GM12878 (cell line): ENCODE measurements at regions of chr12 and their contacts with region 1.

Region 1: GRCh38 chr12:50187084-50187900 is 20.1 kb upstream of the CERS5 start:
- DNase-seq: peak; percentile 47
- ATAC-seq: peak; percentile 91
- H3K4me3 ChIP-seq: no peak overlapping the region
- H3K27ac ChIP-seq: peak overlapping the region; percentile 64
- H3K4me1 ChIP-seq: peaks cover 28% of the 10 kb centered on the region
- H3K27me3 ChIP-seq: no peaks in the 10 kb centered on the region
- CTCF ChIP-seq: no peak
- EP300 ChIP-seq: peak; percentile 94 to 96; a peak in 3 of 4 replicates
- POLR2A ChIP-seq: no peak
- RAD21 ChIP-seq: 0 out of 2 replicates have a peak, but pooled peaks have one; percentile 6

Region 2: GRCh38 chr12:50167041-50167828 is 20.1 kb before region 1 on chr12 and contains the start of gene CERS5:
- CTCF ChIA-PET with region 1: interaction called, 10 read pairs
- POLR2A ChIA-PET with region 1: interaction called, 10 read pairs
- RAD21 ChIA-PET with region 1: interaction called, 3 read pairs
- SMC1A ChIA-PET with region 1: interaction called, 9 read pairs
- in situ Hi-C with region 1: no loop called
- intact Hi-C with region 1: no loop called
- DNase-seq: peak; percentile 85
- ATAC-seq: peak; percentile 99
- H3K4me3 ChIP-seq: peak within 1 kb of the TSS; percentile 80
- H3K27ac ChIP-seq: peak within 1 kb of the TSS; percentile 71
- H3K4me1 ChIP-seq: no peaks in the 10 kb centered on the region
- H3K27me3 ChIP-seq: no peaks in the 10 kb centered on the region
- CTCF ChIP-seq: no peak
- EP300 ChIP-seq: peak in 1 of 2 experiments; percentile 22; a peak in 1 of 4 replicates
- POLR2A ChIP-seq: peak; percentile 87
- RAD21 ChIP-seq: no peak
- polyA plus RNA-seq, gene CERS5: 6.8 to 12.2 TPM

Region 3: DNA sequence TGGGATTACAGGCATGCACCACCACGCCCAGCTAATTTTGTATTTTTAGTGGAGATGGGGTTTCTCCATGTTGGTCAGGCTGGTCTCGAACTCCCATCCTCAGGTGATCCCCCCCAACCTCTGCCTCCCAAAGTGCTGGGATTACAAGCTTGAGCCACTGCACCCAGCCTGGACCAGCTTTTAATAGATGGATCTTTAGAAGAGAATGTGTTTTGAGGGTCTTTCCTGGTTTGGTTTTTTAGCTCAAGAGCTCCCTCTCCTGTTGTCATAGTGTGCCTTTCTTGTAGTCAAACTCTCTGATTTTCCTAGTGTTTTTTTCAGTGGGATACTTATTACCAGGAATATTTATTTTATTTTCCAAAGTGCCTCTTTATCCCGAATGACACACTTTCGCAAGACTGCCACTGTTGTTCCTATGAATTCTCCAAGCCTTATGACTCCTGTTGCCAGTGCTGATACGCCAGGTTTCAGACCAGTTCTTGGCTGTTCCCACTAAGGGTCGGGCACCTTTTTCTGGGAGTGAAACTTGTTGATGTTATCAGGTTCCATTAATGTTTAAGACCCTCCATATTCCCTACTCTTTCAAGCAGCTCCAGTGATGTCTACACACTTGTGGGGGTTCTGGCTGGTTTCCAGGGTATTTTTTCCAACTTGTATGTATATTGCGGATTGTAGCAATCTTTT is 127.5 kb after region 1 on chr12:
- CTCF ChIA-PET with region 1: interaction called, 31 read pairs
- POLR2A ChIA-PET with region 1: no interaction called
- RAD21 ChIA-PET with region 1: interaction called, 8 read pairs
- SMC1A ChIA-PET with region 1: interaction called, 14 read pairs
- in situ Hi-C with region 1: loop called (anchors 5 kb)
- intact Hi-C with region 1: loop called (anchors 1 kb)
- DNase-seq: no peak
- ATAC-seq: peak; percentile 62
- H3K4me3 ChIP-seq: no peak overlapping the region
- H3K27ac ChIP-seq: no peak overlapping the region
- H3K4me1 ChIP-seq: no peaks in the 10 kb centered on the region
- H3K27me3 ChIP-seq: no peaks in the 10 kb centered on the region
- CTCF ChIP-seq: peak; percentile 44 to 63 (median 51); a peak in 5 of 6 replicates
- EP300 ChIP-seq: no peak
- POLR2A ChIP-seq: no peak
- RAD21 ChIP-seq: peak; percentile 83